K562 (cell line): ENCODE measurements at regions of chr3 and their contacts with region 1.

Region 1: GRCh38 chr3:193928354-193929209 is 207.4 kb upstream of the HES1 start:
- DNase-seq: peak; percentile 37 to 77 (median 42)
- ATAC-seq: peak; percentile 85
- H3K4me3 ChIP-seq: no peak overlapping the region
- H3K27ac ChIP-seq: peak overlapping the region; percentile 67
- H3K4me1 ChIP-seq: peaks cover 16 to 43% of the 10 kb centered on the region in 2 experiments
- H3K27me3 ChIP-seq: no peaks in the 10 kb centered on the region
- CTCF ChIP-seq: no peak
- EP300 ChIP-seq: peak; percentile 91
- POLR2A ChIP-seq: no peak
- RAD21 ChIP-seq: no peak

Region 2: GRCh38 chr3:193564012-193564411 is 364.6 kb before region 1 on chr3:
- CTCF ChIA-PET with region 1: no interaction called
- POLR2A ChIA-PET with region 1: no interaction called
- in situ Hi-C with region 1: no loop called
- intact Hi-C with region 1: no loop called
- DNase-seq: no peak
- ATAC-seq: no peak
- H3K4me3 ChIP-seq: no peak overlapping the region
- H3K27ac ChIP-seq: no peak overlapping the region
- H3K4me1 ChIP-seq: no peaks in the 10 kb centered on the region
- H3K27me3 ChIP-seq: peaks cover 0 to 12% of the 10 kb centered on the region in 2 experiments; a peak in 2 of 5 replicates
- CTCF ChIP-seq: peak in 2 of 3 experiments; percentile 6 to 17; a peak in 1 of 6 replicates
- EP300 ChIP-seq: no peak
- POLR2A ChIP-seq: no peak
- RAD21 ChIP-seq: no peak

Region 3: GRCh38 chr3:193938613-193939012 is 10.0 kb after region 1 on chr3:
- CTCF ChIA-PET with region 1: no interaction called
- POLR2A ChIA-PET with region 1: interaction called, 16 read pairs
- in situ Hi-C with region 1: no loop called
- intact Hi-C with region 1: loop called (anchors 1 kb)
- DNase-seq: peak in 2 of 4 experiments; percentile 24 to 41
- ATAC-seq: peak; percentile 6; the same call in 1 of the 3 replicates
- H3K4me3 ChIP-seq: no peak overlapping the region
- H3K27ac ChIP-seq: peak overlapping the region; percentile 39; the same call in 2 of the 3 replicates
- H3K4me1 ChIP-seq: peaks cover 21 to 45% of the 10 kb centered on the region in 2 experiments
- H3K27me3 ChIP-seq: no peaks in the 10 kb centered on the region
- CTCF ChIP-seq: no peak
- EP300 ChIP-seq: no peak
- POLR2A ChIP-seq: no peak
- RAD21 ChIP-seq: no peak

Region 4: GRCh38 chr3:193946945-193947344 is 18.4 kb after region 1 on chr3:
- CTCF ChIA-PET with region 1: no interaction called
- POLR2A ChIA-PET with region 1: interaction called, 16 read pairs
- in situ Hi-C with region 1: no loop called
- intact Hi-C with region 1: no loop called
- DNase-seq: no peak
- ATAC-seq: no peak
- H3K4me3 ChIP-seq: no peak overlapping the region
- H3K27ac ChIP-seq: no peak overlapping the region
- H3K4me1 ChIP-seq: peaks cover 22 to 27% of the 10 kb centered on the region in 2 experiments
- H3K27me3 ChIP-seq: no peaks in the 10 kb centered on the region
- CTCF ChIP-seq: no peak
- EP300 ChIP-seq: no peak
- POLR2A ChIP-seq: no peak
- RAD21 ChIP-seq: no peak